Psoas muscle (tissue), 8 donors: ENCODE measurements at regions of chr1 and their contacts with region 1.

Region 1: DNA sequence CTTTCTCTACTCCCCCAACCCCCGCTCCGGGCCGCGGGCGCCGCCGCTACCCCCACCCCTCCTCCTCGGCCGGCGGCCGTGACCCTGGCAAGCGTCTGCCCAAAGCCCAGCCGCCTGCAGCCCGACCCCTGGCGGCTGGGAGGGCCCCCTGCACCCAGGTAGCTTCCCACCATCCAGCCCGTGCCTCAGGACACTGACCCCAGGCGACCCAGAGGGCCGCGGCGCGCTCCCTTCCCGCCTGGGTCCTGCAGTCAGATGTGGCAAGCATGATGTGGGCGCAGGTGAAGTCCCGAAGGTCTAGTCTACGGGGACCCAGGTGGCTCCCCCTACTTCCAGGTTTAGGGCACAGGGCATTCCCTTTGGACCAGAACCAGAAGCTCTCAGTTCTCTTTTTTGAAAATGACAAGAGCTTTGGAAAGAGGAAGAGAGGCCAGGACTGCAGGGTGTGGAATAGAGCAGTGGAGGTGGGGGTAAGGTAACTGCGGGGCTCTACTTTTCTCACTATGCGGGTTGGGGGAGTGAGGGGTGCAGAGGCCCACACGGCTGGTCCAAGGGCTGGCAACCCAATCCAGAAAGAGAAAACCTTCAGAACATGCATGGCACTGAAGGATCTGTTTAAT is at the start of gene DENND4B:
- DNase-seq: peak; percentile 88 to 93
- ATAC-seq: peak; percentile 84 to 85 (median 84)
- H3K4me3 ChIP-seq: peak within 1 kb of the TSS; percentile 99
- H3K27ac ChIP-seq: peak within 1 kb of the TSS; percentile 94
- H3K4me1 ChIP-seq: peaks cover 24% of the 10 kb centered on the region
- H3K27me3 ChIP-seq: no peaks in the 10 kb centered on the region
- CTCF ChIP-seq: peak; percentile 93
- total RNA-seq, gene DENND4B: 47.1 to 75.4 (median 50.3) TPM

Region 2: DNA sequence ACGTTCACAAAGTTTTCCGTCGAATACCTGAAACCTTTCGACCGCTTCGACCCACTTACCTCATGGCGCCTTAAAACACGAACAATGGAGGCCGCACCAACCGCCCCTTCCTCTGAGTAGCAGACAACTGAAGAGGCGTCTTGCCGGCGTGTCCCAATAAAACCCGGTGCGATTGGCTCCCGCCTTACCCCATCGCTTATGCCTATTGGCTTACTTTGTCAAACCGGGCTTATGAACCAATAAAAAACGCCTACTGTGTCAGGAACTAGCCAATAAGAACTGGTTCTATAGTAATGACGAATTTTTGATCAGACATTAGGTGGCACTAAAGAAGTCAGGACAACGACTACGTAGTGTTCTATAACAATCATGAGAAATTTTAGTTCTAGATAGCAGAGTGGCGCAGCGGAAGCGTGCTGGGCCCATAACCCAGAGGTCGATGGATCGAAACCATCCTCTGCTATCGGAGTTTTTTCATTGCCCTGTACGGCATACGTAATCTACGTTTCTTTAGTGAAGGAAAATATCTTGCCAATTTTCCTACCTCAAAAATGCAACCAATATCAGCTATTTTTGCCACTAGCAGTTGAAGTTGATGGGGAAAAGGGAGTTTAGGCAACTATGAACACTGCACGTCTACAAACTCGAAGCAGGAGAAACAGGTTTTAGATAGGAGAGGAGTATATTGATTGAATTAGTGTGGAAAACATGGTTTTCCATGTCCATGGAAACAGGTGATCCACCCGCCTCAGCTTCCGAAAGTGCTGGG is 275.7 kb before region 1 on chr1 and contains the start of gene ILF2:
- intact Hi-C with region 1: loop called in 1 of 2 experiments (anchors 10 kb)
- DNase-seq: peak; percentile 96 to 99
- ATAC-seq: peak; percentile 92 to 96 (median 94)
- H3K4me3 ChIP-seq: peak within 1 kb of the TSS; percentile 89
- H3K27ac ChIP-seq: peak within 1 kb of the TSS; percentile 88
- H3K4me1 ChIP-seq: peaks cover 13% of the 10 kb centered on the region
- H3K27me3 ChIP-seq: no peaks in the 10 kb centered on the region
- CTCF ChIP-seq: peak; percentile 12
- total RNA-seq, gene ILF2: 71.7 to 102 (median 98.2) TPM

Region 3: DNA sequence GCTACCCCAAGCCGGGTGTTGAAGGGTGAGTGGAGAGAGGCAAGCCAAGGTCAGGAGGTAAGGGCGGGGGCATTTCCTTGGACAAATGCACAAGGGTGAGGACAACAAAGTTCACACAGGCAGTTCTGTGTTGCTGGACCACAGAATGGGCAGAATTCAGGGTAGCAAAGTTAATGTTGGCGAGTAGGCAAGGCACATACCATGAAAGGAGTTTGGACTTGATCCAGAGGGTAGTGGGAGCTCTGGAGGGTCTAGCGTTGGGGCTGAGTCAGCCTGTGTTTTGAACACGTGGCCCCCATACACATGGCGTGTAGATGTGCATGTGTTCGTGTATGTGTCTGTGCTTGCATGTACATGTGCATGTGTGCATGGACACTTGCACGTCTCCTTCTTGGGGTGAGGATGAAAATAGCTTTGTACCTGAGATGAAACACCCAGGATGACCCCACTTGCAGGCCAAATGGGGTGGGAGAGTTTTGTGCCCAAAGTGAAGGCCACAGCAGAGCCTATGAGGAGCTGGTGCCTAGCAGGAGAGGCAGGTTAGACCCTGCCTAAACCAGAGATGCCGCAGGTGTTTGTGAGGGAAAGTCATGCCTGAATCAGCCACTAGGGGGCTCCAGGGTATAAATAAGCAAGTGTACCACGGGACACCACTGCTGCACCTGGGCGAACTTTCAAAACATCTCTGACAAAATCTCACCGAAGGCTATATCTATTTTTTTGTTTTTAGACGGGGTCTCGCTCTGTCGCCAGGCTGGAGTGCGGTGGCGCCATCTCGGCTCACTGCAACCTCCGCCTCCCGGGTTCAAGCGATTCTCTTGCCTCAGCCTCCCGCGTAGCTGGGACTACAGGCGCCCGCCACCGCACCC is 149.7 kb before region 1 on chr1:
- intact Hi-C with region 1: loop called (anchors 1 to 10 kb)
- DNase-seq: peak; percentile 73 to 80
- ATAC-seq: peak; percentile 74 to 85 (median 82)
- H3K4me3 ChIP-seq: no peak overlapping the region
- H3K27ac ChIP-seq: no peak overlapping the region
- H3K4me1 ChIP-seq: no peaks in the 10 kb centered on the region
- H3K27me3 ChIP-seq: no peaks in the 10 kb centered on the region
- CTCF ChIP-seq: peak; percentile 90

Region 4: GRCh38 chr1:153977250-153978240 is 30.8 kb after region 1 on chr1 and contains the start of gene JTB:
- intact Hi-C with region 1: no loop called
- DNase-seq: peak; percentile 89 to 94
- ATAC-seq: peak; percentile 94 to 98 (median 96)
- H3K4me3 ChIP-seq: peak within 1 kb of the TSS; percentile 83
- H3K27ac ChIP-seq: peak within 1 kb of the TSS; percentile 94
- H3K4me1 ChIP-seq: peaks cover 20% of the 10 kb centered on the region
- H3K27me3 ChIP-seq: no peaks in the 10 kb centered on the region
- CTCF ChIP-seq: no peak
- total RNA-seq, gene JTB: 87.6 to 118 (median 95.0) TPM

Region 5: DNA sequence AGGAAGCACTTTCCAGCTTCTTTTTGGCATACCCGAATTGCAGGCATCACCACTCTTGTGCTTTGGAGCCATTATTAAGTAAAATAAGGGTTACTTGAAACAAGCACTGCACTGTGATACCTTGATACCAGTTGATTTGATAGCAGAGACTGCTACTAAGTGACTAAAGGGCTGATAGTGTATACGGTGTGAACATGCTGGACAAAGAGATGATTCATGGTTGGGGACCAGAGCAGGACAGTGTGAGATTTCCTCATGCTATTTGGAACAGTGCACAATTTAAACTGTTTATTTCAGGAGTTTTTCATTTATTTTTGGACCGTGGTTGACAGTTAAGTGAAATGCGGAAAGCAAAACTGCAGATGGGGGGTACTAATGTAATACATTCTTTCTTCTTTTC is 53.7 kb after region 1 on chr1:
- intact Hi-C with region 1: no loop called
- DNase-seq: no peak
- ATAC-seq: no peak
- H3K4me3 ChIP-seq: no peak overlapping the region
- H3K27ac ChIP-seq: no peak overlapping the region
- H3K4me1 ChIP-seq: no peaks in the 10 kb centered on the region
- H3K27me3 ChIP-seq: no peaks in the 10 kb centered on the region
- CTCF ChIP-seq: no peak